GM13976 (cell line): ENCODE measurements at regions of chr11 and their contacts with region 1.

Region 1: DNA sequence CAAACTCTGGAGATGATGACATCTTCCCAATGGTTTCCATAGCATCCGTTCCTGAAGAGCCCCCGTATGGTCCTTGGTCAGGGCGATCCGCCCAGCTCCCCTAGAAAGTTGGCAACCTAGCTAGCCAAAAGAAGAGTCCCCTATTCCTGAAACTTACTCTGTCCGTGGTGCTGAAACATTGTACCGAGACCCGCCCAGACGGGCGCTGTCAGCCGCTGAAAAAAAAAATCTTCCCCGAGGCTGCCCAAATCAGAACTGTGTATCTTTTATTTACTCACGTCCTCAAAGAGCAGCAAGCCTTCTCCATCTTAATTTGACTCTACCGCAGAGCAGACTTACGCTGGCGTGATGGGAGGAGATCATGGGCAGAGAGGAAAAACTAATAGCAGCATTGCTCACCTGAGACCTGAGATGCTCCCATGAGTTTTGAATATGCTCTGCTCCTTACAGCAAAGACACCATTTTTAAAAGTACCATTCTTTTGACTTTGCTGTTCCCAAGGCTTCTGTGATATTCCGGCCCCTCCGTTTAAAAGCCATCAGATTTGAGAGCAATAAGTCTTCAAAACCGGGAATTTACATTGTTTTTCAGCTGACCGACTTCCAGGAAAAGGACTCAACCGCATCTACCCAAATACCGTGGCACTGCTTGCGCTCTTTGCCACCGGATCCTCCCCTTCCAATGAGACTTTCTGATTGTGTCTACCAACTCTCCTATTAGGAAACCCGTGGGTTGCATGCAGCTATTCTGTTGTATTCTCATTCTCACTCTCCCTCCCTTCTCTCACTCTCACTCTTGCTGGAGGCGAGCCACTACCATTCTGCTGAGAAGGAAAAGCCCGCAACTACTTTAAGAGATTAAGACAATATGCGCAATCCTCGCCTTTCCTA is at the start of gene SLC17A6:
- DNase-seq: peak; percentile 36
- CTCF ChIP-seq: peak; percentile 1

Region 2: DNA sequence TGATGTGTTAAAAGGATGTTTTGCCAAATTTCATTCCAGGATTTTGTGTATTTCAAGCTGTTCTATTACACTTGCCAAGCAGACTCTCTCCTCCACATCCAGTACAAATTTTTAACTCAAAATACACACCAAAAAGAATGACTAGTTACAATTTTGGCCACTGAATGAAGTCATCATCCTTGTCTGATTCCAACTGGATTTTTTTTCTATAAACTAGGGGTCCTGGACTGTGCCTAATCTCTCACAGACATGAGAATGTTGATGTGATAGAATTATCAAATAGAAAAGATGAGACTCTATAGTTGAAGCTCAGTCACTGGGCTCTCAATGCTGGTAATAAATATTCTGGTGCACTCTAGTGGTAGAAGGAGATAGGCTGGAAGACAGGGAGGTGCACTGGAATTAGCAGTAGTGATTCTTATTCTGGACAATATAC is 202.0 kb after region 1 on chr11:
- in situ Hi-C with region 1: loop called (anchors 25 kb)
- DNase-seq: no peak
- CTCF ChIP-seq: no peak

Region 3: GRCh38 chr11:22787551-22788162 is 449.8 kb after region 1 on chr11:
- in situ Hi-C with region 1: loop called (anchors 10 kb)
- DNase-seq: peak; percentile 39
- CTCF ChIP-seq: no peak

Region 4: GRCh38 chr11:22829231-22830081 is 491.6 kb after region 1 on chr11 and contains the start of gene SVIP:
- in situ Hi-C with region 1: loop called (anchors 10 kb)
- DNase-seq: peak; percentile 93
- CTCF ChIP-seq: peak; percentile 89